HepG2 (cell line): ENCODE measurements at regions of chr20 and their contacts with region 1.

Region 1: DNA sequence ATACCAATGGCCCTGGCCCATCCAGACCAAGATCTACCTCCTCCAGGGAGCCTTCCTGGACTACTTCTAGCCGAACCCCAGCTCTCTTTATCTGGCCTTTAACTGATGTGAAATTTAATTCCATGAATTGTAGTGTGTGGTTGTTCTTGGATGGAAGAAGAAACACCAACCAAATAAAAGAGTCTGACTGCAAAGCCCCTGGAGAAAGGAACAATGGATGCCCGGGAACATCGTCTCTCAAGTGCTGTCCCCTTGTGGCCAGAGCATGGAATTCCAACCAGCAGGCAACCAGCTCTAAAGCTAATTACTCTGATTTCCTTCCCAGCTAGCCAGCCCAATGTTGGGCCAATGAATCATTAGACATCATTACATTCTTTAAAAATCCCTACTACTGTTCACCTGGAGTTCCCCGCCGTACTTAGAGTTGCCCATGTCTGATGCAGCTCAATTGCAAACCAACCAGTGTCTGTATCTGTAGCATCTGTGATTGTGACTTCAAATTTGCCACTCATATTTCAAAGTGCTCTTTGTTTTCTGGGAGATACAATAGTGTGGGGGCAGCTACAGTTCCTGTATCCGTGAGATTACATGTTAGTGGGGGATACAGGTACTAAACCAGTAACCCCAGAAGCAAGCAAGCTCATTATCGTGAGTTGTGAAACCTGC is 141.1 kb downstream of the ANKRD60 start:
- DNase-seq: peak; percentile 51
- ATAC-seq: peak; percentile 79
- H3K4me3 ChIP-seq: no peak overlapping the region
- H3K27ac ChIP-seq: no peak overlapping the region
- H3K4me1 ChIP-seq: no peaks in the 10 kb centered on the region
- H3K27me3 ChIP-seq: peaks cover 2 to 23% of the 10 kb centered on the region in 2 experiments; a peak in 2 of 5 replicates
- CTCF ChIP-seq: peak; percentile 78
- EP300 ChIP-seq: no peak
- POLR2A ChIP-seq: no peak
- RAD21 ChIP-seq: peak; percentile 64

Region 2: GRCh38 chr20:57514273-57514751 is 573.0 kb before region 1 on chr20:
- CTCF ChIA-PET with region 1: no interaction called
- POLR2A ChIA-PET with region 1: no interaction called
- in situ Hi-C with region 1: no loop called
- intact Hi-C with region 1: loop called (anchors 5 kb)
- DNase-seq: peak; percentile 73
- ATAC-seq: peak; percentile 87
- H3K4me3 ChIP-seq: no peak overlapping the region
- H3K27ac ChIP-seq: no peak overlapping the region
- H3K4me1 ChIP-seq: 0 out of 2 replicates have a peak, but pooled peaks cover 4% of the 10 kb centered on the region
- H3K27me3 ChIP-seq: peaks cover 0 to 43% of the 10 kb centered on the region in 2 experiments; a peak in 3 of 5 replicates
- CTCF ChIP-seq: peak; percentile 95
- EP300 ChIP-seq: no peak
- POLR2A ChIP-seq: no peak
- RAD21 ChIP-seq: peak; percentile 98

Region 3: GRCh38 chr20:57654363-57654997 is 432.8 kb before region 1 on chr20:
- CTCF ChIA-PET with region 1: interaction called, 20 read pairs
- POLR2A ChIA-PET with region 1: no interaction called
- in situ Hi-C with region 1: loop called (anchors 5 kb)
- intact Hi-C with region 1: loop called (anchors 1 kb)
- DNase-seq: peak; percentile 42
- ATAC-seq: peak; percentile 74
- H3K4me3 ChIP-seq: no peak overlapping the region
- H3K27ac ChIP-seq: no peak overlapping the region
- H3K4me1 ChIP-seq: peaks cover 13% of the 10 kb centered on the region
- H3K27me3 ChIP-seq: peaks cover 35 to 97% of the 10 kb centered on the region in 2 experiments
- CTCF ChIP-seq: peak; percentile 92
- EP300 ChIP-seq: no peak
- POLR2A ChIP-seq: no peak
- RAD21 ChIP-seq: peak; percentile 69

Region 4: GRCh38 chr20:58048169-58048568 is 39.2 kb before region 1 on chr20:
- CTCF ChIA-PET with region 1: no interaction called
- POLR2A ChIA-PET with region 1: no interaction called
- in situ Hi-C with region 1: no loop called
- intact Hi-C with region 1: no loop called
- DNase-seq: peak; percentile 16
- ATAC-seq: no peak
- H3K4me3 ChIP-seq: no peak overlapping the region
- H3K27ac ChIP-seq: no peak overlapping the region
- H3K4me1 ChIP-seq: no peaks in the 10 kb centered on the region
- H3K27me3 ChIP-seq: peaks cover 4 to 29% of the 10 kb centered on the region in 2 experiments
- CTCF ChIP-seq: no peak
- EP300 ChIP-seq: no peak
- POLR2A ChIP-seq: no peak
- RAD21 ChIP-seq: no peak